ENCODE measurements at regions of chr7 and their contacts with region 1.

Region 1: GRCh38 chr7:108181073-108181985 is 51.2 kb upstream of the LAMB4 start:
- DNase-seq: peak; percentile 65
- H3K4me3 ChIP-seq: no peak overlapping the region
- CTCF ChIP-seq: peak; percentile 47

Region 2: DNA sequence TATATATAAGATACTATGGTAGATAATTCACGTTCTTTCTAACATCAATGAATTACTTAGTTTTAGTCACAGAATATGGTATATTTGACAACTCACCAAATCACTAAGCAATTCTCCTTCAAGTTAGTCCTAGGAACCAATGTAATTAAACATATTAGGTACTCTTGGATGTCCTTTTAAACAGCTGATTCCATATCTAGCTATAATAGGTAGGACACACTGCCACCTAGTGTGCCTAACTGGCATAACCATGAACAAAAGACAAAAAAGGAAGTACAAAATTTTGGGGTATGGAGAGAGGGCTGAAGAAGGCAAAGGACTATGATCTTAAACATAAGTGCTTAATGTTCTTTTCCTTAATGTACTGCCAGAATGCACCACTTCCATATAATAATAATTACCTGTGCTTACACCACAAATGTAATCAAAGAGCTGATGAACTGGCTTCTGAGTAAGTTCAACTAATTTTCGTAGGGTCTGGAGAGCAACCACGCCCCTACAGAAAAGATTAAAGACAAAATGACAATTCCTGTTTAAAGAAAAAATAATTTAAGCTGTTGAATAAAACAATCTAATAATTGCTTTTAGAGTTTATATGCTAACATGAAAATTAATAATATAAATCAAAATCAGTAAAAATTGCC is 315.9 kb after region 1 on chr7:
- in situ Hi-C with region 1: loop called (anchors 25 kb)
- DNase-seq: peak; percentile 32
- H3K4me3 ChIP-seq: no peak overlapping the region
- CTCF ChIP-seq: peak; percentile 79

Measured in astrocyte of the cerebellum (primary cell).